ENCODE measurements at regions of chr9 and their contacts with region 1.

Region 1: GRCh38 chr9:109469646-109470358 is 28.3 kb downstream of the PTPN3 start:
- DNase-seq: peak; percentile 63
- H3K4me3 Mint-ChIP-seq: no peak overlapping the region
- H3K27ac Mint-ChIP-seq: peak overlapping the region; percentile 34
- H3K4me1 Mint-ChIP-seq: peaks cover 47% of the 10 kb centered on the region
- H3K27me3 Mint-ChIP-seq: peaks cover 19% of the 10 kb centered on the region

Region 2: DNA sequence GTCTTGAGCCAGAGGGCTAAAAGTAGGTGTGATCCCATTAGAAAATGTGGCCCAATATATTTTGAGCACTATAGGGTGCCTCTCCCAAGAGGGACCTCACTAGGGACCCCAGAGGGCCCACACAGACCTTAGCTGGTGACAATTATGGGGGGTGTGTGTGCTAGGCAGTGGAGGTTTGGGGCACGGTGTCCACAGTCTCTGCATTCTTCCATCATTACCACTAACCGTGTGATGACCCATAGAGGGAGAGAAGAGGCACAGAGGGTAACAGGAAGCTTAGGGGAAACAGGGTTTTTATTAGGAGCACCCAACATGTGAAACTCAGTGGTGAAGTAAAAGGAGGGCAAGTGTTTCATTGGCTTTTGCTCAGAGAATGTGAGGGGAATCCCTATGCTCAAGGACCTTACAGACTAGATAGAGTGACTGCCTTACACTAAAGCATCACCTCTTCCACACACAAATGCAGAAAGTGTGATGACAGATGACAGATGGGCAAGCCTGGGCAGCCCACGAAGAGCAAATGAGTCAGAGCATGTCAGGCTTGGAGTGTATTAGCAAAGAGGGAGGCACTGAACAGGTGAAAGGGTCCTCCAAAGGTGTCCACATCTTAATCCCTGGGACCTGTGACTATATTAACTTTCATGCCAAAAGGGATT is 610.2 kb before region 1 on chr9:
- intact Hi-C with region 1: no loop called
- DNase-seq: no peak
- H3K4me3 Mint-ChIP-seq: no peak overlapping the region
- H3K27ac Mint-ChIP-seq: no peak overlapping the region
- H3K4me1 Mint-ChIP-seq: peaks cover 7% of the 10 kb centered on the region
- H3K27me3 Mint-ChIP-seq: no peaks in the 10 kb centered on the region

Region 3: DNA sequence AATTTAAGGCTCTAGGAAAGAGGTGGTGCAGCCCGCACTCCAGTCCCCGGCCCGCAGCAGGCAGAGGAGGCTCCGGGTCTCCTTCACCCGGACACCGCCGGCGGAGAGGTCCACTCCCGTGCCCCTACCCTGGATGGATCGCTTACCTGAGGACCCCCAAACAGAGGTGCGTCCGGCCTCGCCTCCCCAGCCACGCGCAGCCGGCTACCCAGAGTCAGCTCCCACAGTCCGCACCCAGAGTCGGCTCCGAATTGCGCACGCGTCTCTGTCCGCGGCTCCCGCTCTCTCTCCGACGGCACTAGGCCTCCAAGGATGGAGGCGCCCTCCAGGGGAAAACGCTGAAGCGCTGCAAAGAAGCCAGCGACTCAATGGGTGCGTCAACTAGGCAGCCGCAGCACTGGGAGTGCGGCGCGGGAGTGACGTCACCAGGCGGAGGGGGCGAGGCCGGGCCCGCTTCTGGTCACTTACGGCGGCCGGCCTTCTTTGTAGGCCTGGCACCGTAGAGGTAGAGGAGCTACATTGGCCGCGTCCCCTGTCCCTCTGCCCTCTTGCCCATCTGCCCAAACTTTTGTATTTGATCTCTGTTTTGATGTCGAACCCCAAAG is 536.0 kb before region 1 on chr9 and contains the start of gene ELP1:
- intact Hi-C with region 1: loop called (anchors 5 kb)
- DNase-seq: peak; percentile 90
- H3K4me3 Mint-ChIP-seq: peak within 1 kb of the TSS; percentile 95
- H3K27ac Mint-ChIP-seq: peak within 1 kb of the TSS; percentile 95
- H3K4me1 Mint-ChIP-seq: peaks cover 23% of the 10 kb centered on the region
- H3K27me3 Mint-ChIP-seq: no peaks in the 10 kb centered on the region
- total RNA-seq, gene ELP1: 31.6 and 35.2 TPM in 2 replicates

Region 4: DNA sequence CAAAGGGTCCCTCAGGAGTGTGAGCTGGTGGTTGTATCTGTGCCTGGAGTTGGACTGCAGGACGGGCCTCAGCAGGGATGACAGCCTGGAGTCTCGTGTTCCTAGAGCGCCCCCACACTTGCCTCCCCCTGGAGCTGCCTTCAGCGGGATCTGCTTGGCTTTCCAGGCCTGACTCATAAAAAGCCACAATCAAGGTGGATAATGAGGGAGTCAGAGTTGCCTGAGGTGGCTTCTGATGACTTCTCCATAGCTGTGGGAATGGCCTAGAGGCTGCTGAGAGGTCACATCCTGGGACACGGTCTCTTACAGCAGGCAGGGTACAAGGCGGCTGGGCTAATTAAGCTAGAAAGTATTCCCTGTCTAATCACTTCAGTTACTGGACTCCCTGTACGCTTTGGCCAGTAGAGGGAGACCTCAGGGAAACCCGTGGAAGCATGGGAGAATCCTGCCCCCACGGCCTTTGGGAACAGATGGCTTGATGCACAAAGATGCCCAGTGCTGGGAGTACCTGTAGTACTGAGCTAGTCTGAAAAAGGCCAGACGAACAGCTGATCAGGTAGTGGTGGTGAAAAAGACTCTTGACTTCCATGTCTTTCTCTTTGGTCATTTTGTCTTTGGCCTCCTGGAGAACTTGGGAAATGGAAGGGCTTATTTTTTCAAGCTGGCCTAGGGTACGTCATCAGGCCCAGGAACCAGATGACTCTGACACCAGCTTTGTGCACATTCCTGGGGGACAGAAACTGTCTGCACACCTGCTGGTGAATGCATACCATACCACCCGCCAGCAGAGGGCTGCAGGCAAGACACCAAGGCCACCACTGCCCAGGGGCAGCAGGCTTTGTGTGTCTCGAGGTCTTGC is 286.6 kb before region 1 on chr9:
- intact Hi-C with region 1: loop called (anchors 1 kb)
- DNase-seq: no peak
- H3K4me3 Mint-ChIP-seq: no peak overlapping the region
- H3K27ac Mint-ChIP-seq: no peak overlapping the region
- H3K4me1 Mint-ChIP-seq: peaks cover 7% of the 10 kb centered on the region
- H3K27me3 Mint-ChIP-seq: peaks cover 42% of the 10 kb centered on the region

Region 5: GRCh38 chr9:109193974-109194556 is 275.7 kb before region 1 on chr9:
- intact Hi-C with region 1: no loop called
- DNase-seq: no peak
- H3K4me3 Mint-ChIP-seq: no peak overlapping the region
- H3K27ac Mint-ChIP-seq: no peak overlapping the region
- H3K4me1 Mint-ChIP-seq: no peaks in the 10 kb centered on the region
- H3K27me3 Mint-ChIP-seq: peaks cover 12% of the 10 kb centered on the region

Region 6: GRCh38 chr9:109320742-109321448 is 148.9 kb before region 1 on chr9 and contains the start of gene EPB41L4B:
- intact Hi-C with region 1: loop called (anchors 1 kb)
- DNase-seq: peak; percentile 85
- H3K4me3 Mint-ChIP-seq: peak within 1 kb of the TSS; percentile 84
- H3K27ac Mint-ChIP-seq: peak within 1 kb of the TSS; percentile 72
- H3K4me1 Mint-ChIP-seq: peaks cover 23% of the 10 kb centered on the region
- H3K27me3 Mint-ChIP-seq: peaks cover 69% of the 10 kb centered on the region
- total RNA-seq, gene EPB41L4B: 2.0 and 2.2 TPM in 2 replicates

Region 7: GRCh38 chr9:109411798-109412352 is 57.9 kb before region 1 on chr9:
- intact Hi-C with region 1: loop called (anchors 1 kb)
- DNase-seq: no peak
- H3K4me3 Mint-ChIP-seq: peak overlapping the region; percentile 32
- H3K27ac Mint-ChIP-seq: peak overlapping the region; percentile 92
- H3K4me1 Mint-ChIP-seq: peaks cover 73% of the 10 kb centered on the region
- H3K27me3 Mint-ChIP-seq: no peaks in the 10 kb centered on the region

Region 8: GRCh38 chr9:109440797-109441287 is 29.0 kb before region 1 on chr9:
- intact Hi-C with region 1: loop called (anchors 1 kb)
- DNase-seq: peak; percentile 71
- H3K4me3 Mint-ChIP-seq: no peak overlapping the region
- H3K27ac Mint-ChIP-seq: peak overlapping the region; percentile 85
- H3K4me1 Mint-ChIP-seq: peaks cover 34% of the 10 kb centered on the region
- H3K27me3 Mint-ChIP-seq: peaks cover 9% of the 10 kb centered on the region

Region 9: DNA sequence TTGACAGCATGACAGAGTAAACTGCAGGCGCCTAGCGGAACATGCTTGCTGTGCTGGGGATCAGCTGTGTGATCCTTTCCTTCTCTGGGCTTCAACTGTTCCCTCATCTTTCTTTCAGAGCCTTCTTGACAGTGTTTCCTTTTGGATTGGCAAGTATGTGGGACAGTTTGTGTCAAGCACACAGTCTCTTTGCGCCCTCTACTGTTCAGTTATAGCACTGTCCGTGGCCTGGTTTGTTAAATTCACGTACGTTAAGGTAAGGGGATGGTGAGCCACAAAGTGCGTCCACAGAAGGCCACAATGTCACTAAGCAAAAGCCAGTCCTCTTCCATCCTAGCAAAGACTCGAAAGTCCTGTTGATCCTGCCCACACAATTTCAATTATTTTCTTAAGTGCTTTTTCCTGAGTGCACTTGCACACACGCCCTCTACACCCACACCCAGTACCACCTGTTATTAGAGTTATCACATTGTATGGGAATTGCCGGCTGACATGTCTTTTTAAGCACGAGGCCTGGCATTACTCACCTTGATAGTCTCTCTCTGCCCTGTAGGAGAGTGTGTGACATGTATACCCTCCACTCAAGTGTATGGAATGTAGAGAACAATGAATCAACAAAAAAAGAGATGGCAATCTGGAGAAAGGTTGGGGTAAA is 50.8 kb after region 1 on chr9:
- intact Hi-C with region 1: loop called (anchors 1 kb)
- DNase-seq: peak; percentile 24
- H3K4me3 Mint-ChIP-seq: no peak overlapping the region
- H3K27ac Mint-ChIP-seq: no peak overlapping the region
- H3K4me1 Mint-ChIP-seq: peaks cover 5% of the 10 kb centered on the region
- H3K27me3 Mint-ChIP-seq: peaks cover 17% of the 10 kb centered on the region

Measured in activated T-helper 1 cell treated with anti-CD3 and anti-CD28 coated beads, Interleukin-12 subunit alpha, Interleukin-12 subunit beta, Interleukin-2, Interleukin-4 antibody, amounts not matched to agents 30 ng/mL and 10 ng/mL and 1 ng/mL, durations not matched to agents 14 hours and 24 hours and 36 hours (primary cell).